B cell (primary cell): ENCODE measurements at regions of chr6 and their contacts with region 1.

Region 1: DNA sequence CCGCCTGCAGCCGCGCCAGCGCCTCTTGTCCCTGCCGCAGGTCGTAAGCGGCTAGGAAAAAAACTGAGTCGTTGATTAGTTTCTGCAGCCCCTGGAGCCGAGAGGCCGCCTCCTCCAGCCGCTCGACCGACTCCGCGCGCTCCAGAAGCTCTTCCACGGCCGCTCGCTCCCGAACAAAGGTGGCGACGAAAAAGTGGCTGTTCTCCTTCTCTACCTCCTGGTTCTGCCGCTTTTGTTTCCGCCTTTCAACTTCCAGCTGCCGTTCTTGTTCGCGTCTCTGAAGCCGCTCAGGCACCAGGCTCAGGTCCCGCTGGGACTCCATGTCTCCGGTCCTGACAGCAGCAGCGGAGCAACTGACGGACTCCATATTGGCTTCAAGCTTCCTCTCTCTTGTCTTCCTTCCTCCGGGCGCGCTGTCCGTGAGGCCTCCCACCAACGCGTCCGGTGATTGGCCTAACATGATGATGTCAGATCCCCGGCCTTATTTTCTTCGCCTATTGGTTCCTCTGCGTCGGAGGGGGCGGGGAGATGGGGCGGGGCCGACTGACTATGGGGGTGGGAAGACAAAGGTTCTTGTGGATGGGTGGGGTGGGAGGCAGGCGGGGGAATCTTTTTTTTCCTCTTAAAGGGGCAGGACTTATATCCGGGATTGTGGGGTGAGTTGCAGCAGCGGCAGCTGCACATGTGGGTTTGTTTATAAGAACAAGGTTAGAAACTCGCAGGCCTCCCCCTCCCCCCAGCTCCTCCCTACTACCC is at the start of gene TBCC:
- DNase-seq: peak; percentile 96
- ATAC-seq: peak; percentile 74
- H3K4me3 ChIP-seq: peak within 1 kb of the TSS; percentile 81 to 100 (median 90)
- H3K4me3 Mint-ChIP-seq: peak within 1 kb of the TSS; percentile 100
- H3K27ac ChIP-seq: peak within 1 kb of the TSS; percentile 78 to 91
- H3K27ac Mint-ChIP-seq: peak within 1 kb of the TSS; percentile 100
- H3K4me1 ChIP-seq: peaks cover 21 to 28% of the 10 kb centered on the region in 2 donors
- H3K4me1 Mint-ChIP-seq: peaks cover 35% of the 10 kb centered on the region
- H3K27me3 ChIP-seq: no peaks in the 10 kb centered on the region
- H3K27me3 Mint-ChIP-seq: no peaks in the 10 kb centered on the region
- CTCF ChIP-seq: no peak
- total RNA-seq, gene TBCC: 54.6 and 55.7 TPM in 2 replicates

Region 2: GRCh38 chr6:42217519-42218367 is 528.1 kb before region 1 on chr6 and contains the start of gene MRPS10:
- CTCF ChIA-PET with region 1: no interaction called
- POLR2A ChIA-PET with region 1: no interaction called
- intact Hi-C with region 1: loop called (anchors 5 kb)
- DNase-seq: peak; percentile 92
- ATAC-seq: peak; percentile 99
- H3K4me3 ChIP-seq: peak within 1 kb of the TSS; percentile 76 to 98 (median 86)
- H3K4me3 Mint-ChIP-seq: peak within 1 kb of the TSS; percentile 99
- H3K27ac ChIP-seq: peak within 1 kb of the TSS; percentile 58 to 76
- H3K27ac Mint-ChIP-seq: peak within 1 kb of the TSS; percentile 98
- H3K4me1 ChIP-seq: peaks cover 7 to 14% of the 10 kb centered on the region in 2 donors
- H3K4me1 Mint-ChIP-seq: peaks cover 23% of the 10 kb centered on the region
- H3K27me3 ChIP-seq: no peaks in the 10 kb centered on the region
- H3K27me3 Mint-ChIP-seq: peaks cover 4% of the 10 kb centered on the region
- CTCF ChIP-seq: no peak
- total RNA-seq, gene MRPS10: 26.4 and 28.6 TPM in 2 replicates

Region 3: GRCh38 chr6:42522942-42523814 is 222.7 kb before region 1 on chr6:
- CTCF ChIA-PET with region 1: no interaction called
- POLR2A ChIA-PET with region 1: no interaction called
- intact Hi-C with region 1: no loop called
- DNase-seq: no peak
- ATAC-seq: no peak
- H3K4me3 ChIP-seq: no peak overlapping the region
- H3K4me3 Mint-ChIP-seq: no peak overlapping the region
- H3K27ac ChIP-seq: no peak overlapping the region
- H3K27ac Mint-ChIP-seq: no peak overlapping the region
- H3K4me1 ChIP-seq: peaks cover 6 to 15% of the 10 kb centered on the region in 2 donors
- H3K4me1 Mint-ChIP-seq: peaks cover 17% of the 10 kb centered on the region
- H3K27me3 ChIP-seq: no peaks in the 10 kb centered on the region
- H3K27me3 Mint-ChIP-seq: no peaks in the 10 kb centered on the region
- CTCF ChIP-seq: no peak

Region 4: GRCh38 chr6:42661540-42662153 is 84.2 kb before region 1 on chr6:
- CTCF ChIA-PET with region 1: interaction called, 6 read pairs
- POLR2A ChIA-PET with region 1: interaction called, 12 read pairs
- intact Hi-C with region 1: no loop called
- DNase-seq: peak; percentile 84
- ATAC-seq: peak; percentile 93
- H3K4me3 ChIP-seq: no peak overlapping the region
- H3K4me3 Mint-ChIP-seq: no peak overlapping the region
- H3K27ac ChIP-seq: peak overlapping the region in 1 of 2 donors; percentile 5
- H3K27ac Mint-ChIP-seq: no peak overlapping the region
- H3K4me1 ChIP-seq: no peaks in the 10 kb centered on the region
- H3K4me1 Mint-ChIP-seq: no peaks in the 10 kb centered on the region
- H3K27me3 ChIP-seq: no peaks in the 10 kb centered on the region
- H3K27me3 Mint-ChIP-seq: no peaks in the 10 kb centered on the region
- CTCF ChIP-seq: peak; percentile 91

Region 5: GRCh38 chr6:42771741-42772100 is 25.8 kb after region 1 on chr6:
- CTCF ChIA-PET with region 1: interaction called, 14 read pairs
- POLR2A ChIA-PET with region 1: interaction called, 118 read pairs
- intact Hi-C with region 1: loop called (anchors 1 kb)
- DNase-seq: peak; percentile 68
- ATAC-seq: no peak
- H3K4me3 ChIP-seq: peak overlapping the region; percentile 30 to 77 (median 49)
- H3K4me3 Mint-ChIP-seq: peak overlapping the region; percentile 87
- H3K27ac ChIP-seq: peak overlapping the region; percentile 90 to 92
- H3K27ac Mint-ChIP-seq: peak overlapping the region; percentile 99
- H3K4me1 ChIP-seq: peaks cover 39 to 52% of the 10 kb centered on the region in 2 donors
- H3K4me1 Mint-ChIP-seq: peaks cover 52% of the 10 kb centered on the region
- H3K27me3 ChIP-seq: no peaks in the 10 kb centered on the region
- H3K27me3 Mint-ChIP-seq: no peaks in the 10 kb centered on the region
- CTCF ChIP-seq: no peak

Region 6: DNA sequence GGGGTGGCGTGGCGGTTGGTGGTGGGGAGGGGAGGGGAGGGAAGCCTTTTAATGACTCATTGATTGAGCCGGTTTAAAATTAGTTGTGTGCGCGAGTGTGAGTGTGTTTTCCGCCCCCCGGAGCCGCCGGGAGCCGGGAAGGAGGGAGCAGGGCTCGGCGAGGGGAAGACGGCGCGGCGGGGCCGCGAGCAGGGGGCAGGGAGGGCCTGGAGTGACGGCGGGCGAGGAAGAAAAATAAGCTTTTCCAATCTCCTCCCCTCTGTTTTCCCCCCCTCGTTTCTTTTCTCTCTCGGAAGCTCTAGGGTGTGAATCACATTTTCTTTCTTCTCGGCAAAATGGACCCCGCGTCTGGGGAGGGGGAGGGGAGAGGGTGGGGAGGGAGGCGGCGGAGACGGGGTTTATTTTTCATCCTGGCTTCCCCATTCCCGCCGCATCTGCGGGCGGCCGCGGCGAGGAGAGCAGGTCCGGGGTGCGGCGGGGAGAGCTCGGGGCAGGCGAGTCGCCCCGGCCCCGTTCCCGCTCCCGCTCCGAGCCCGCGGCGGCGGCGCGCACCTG is 36.8 kb after region 1 on chr6:
- CTCF ChIA-PET with region 1: interaction called, 29 read pairs
- POLR2A ChIA-PET with region 1: interaction called, 426 read pairs
- intact Hi-C with region 1: loop called (anchors 1 kb)
- DNase-seq: peak; percentile 88
- ATAC-seq: peak; percentile 48
- H3K4me3 ChIP-seq: peak overlapping the region; percentile 55 to 99 (median 96)
- H3K4me3 Mint-ChIP-seq: peak overlapping the region; percentile 93
- H3K27ac ChIP-seq: peak overlapping the region; percentile 99 to 100
- H3K27ac Mint-ChIP-seq: peak overlapping the region; percentile 100
- H3K4me1 ChIP-seq: peaks cover 54 to 57% of the 10 kb centered on the region in 2 donors
- H3K4me1 Mint-ChIP-seq: peaks cover 41% of the 10 kb centered on the region
- H3K27me3 ChIP-seq: no peaks in the 10 kb centered on the region
- H3K27me3 Mint-ChIP-seq: no peaks in the 10 kb centered on the region
- CTCF ChIP-seq: no peak

Region 7: DNA sequence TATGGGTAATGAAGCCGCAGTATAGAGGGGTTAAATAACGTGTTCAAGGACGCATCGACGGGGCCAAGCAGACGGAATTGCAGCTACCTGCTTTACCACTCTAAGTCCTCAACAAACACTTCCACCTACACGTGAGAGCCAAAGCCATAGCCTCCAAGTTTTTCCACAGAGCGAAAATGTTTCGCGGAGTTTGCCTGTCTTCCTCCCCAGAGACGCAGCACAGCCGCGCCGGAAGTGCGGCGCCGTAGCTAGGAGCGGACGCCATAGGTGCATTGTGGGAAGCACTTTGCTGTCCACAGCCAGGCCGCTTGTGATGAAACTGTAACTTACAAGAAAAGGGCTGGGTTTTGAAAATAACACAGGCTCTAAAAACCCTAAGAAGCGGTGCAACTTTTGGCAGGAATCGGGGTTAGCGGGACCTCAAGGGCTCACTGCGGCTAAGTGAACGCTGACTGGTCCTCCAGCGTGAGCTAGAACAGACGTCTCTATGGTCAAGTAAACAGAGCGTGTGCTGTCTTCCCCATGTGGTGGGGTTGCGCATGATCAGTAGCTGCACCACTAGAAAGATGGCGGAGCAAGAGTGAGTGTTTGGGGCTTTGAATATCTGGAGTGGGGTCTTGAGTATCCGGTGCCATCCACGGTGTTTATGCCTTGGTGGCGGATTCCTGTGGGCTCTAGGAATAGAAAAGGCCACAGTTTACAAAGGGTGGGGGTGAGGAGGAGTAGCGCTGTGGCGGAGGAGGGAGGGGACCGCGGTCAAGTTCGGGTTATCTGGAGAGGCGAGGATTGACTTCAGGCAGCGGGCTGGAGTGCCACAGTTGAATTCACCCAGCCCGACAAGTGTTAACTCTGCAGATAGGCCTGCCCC is 133.7 kb after region 1 on chr6 and contains the start of gene RPL7L1:
- CTCF ChIA-PET with region 1: interaction called, 7 read pairs
- POLR2A ChIA-PET with region 1: interaction called, 45 read pairs
- intact Hi-C with region 1: loop called (anchors 1 kb)
- DNase-seq: peak; percentile 93
- ATAC-seq: peak; percentile 95
- H3K4me3 ChIP-seq: peak within 1 kb of the TSS; percentile 76 to 99 (median 90)
- H3K4me3 Mint-ChIP-seq: peak within 1 kb of the TSS; percentile 96
- H3K27ac ChIP-seq: peak within 1 kb of the TSS; percentile 85 to 87
- H3K27ac Mint-ChIP-seq: peak within 1 kb of the TSS; percentile 97
- H3K4me1 ChIP-seq: peaks cover 8 to 18% of the 10 kb centered on the region in 2 donors
- H3K4me1 Mint-ChIP-seq: peaks cover 21% of the 10 kb centered on the region
- H3K27me3 ChIP-seq: no peaks in the 10 kb centered on the region
- H3K27me3 Mint-ChIP-seq: no peaks in the 10 kb centered on the region
- CTCF ChIP-seq: no peak
- total RNA-seq, gene RPL7L1: 95.9 and 100 TPM in 2 replicates

Region 8: GRCh38 chr6:43029120-43029519 is 283.2 kb after region 1 on chr6:
- CTCF ChIA-PET with region 1: no interaction called
- POLR2A ChIA-PET with region 1: no interaction called
- intact Hi-C with region 1: no loop called
- DNase-seq: no peak
- ATAC-seq: no peak
- H3K4me3 ChIP-seq: no peak overlapping the region
- H3K4me3 Mint-ChIP-seq: no peak overlapping the region
- H3K27ac ChIP-seq: no peak overlapping the region
- H3K27ac Mint-ChIP-seq: no peak overlapping the region
- H3K4me1 ChIP-seq: peaks cover 0 to 1% of the 10 kb centered on the region in 2 donors
- H3K4me1 Mint-ChIP-seq: peaks cover 6% of the 10 kb centered on the region
- H3K27me3 ChIP-seq: no peaks in the 10 kb centered on the region
- H3K27me3 Mint-ChIP-seq: no peaks in the 10 kb centered on the region
- CTCF ChIP-seq: no peak

Region 9: DNA sequence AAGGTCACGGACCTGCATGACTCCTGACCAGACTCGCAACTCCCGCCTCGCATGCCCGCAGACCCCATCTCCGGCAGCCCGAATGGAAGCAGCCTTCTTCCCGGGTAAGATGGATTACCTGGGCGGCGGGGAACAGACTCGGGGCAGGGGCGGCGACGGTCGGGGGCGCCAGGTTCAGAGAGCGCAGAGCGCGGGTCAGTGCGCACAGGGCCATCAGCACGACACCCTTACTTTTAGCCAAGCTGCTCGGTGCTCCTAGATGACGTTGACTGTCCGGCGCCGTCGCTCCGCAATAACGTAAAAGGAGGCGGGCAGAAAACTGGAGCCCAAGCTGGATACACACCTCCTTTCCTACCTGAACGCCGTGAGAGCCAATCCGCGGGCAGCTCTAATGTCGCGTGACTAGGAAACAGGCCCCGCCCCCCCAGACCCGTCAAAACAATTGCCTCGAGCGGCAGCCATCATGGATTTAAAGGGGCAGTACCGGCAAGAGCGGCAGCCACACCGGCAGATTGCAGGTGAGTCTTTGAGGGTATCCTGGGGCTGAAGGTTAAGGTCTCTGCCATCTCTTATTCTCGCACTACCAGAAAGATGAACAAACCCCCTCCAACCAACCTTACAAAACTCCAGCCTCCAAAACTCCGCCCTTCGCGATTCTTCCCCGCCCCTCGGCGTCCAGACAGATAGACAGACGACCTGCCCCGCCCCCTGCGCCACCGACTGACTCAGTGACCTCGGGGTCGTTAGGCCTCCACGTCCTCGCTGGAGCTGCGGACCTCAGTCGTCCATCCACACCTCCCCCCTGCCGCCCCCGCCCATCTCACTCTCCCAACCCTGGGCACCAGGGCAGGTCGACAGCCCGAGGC is 313.5 kb after region 1 on chr6 and contains the starts of genes KLC4 and MRPL2:
- CTCF ChIA-PET with region 1: no interaction called
- POLR2A ChIA-PET with region 1: interaction called, 8 read pairs
- intact Hi-C with region 1: loop called (anchors 1 kb)
- DNase-seq: peak; percentile 98
- ATAC-seq: peak; percentile 96
- H3K4me3 ChIP-seq: peak within 1 kb of the TSS; percentile 76 to 96 (median 89)
- H3K4me3 Mint-ChIP-seq: peak within 1 kb of the TSS; percentile 99
- H3K27ac ChIP-seq: peak within 1 kb of the TSS; percentile 76 to 86
- H3K27ac Mint-ChIP-seq: peak within 1 kb of the TSS; percentile 100
- H3K4me1 ChIP-seq: peaks cover 17 to 23% of the 10 kb centered on the region in 2 donors
- H3K4me1 Mint-ChIP-seq: peaks cover 38% of the 10 kb centered on the region
- H3K27me3 ChIP-seq: no peaks in the 10 kb centered on the region
- H3K27me3 Mint-ChIP-seq: no peaks in the 10 kb centered on the region
- CTCF ChIP-seq: no peak
- total RNA-seq, gene KLC4: 52.7 and 61.9 TPM in 2 replicates
- total RNA-seq, gene MRPL2: 43.8 and 45.6 TPM in 2 replicates